ENCODE measurements at regions of chrX and their contacts with region 1.

Region 1: GRCh38 chrX:65677954-65678469 is 10.6 kb downstream of the MSN start:
- DNase-seq: peak in 2 of 3 donors; percentile 21 to 47
- H3K4me3 ChIP-seq: peak overlapping the region in 1 of 3 experiments; percentile 49
- H3K4me3 Mint-ChIP-seq: peak overlapping the region in 1 of 2 donors; percentile 46
- H3K27ac ChIP-seq: peak overlapping the region; percentile 70 to 75
- H3K27ac Mint-ChIP-seq: peak overlapping the region; percentile 77 to 94 (median 87)
- H3K4me1 ChIP-seq: peaks cover 93 to 97% of the 10 kb centered on the region in 2 donors
- H3K4me1 Mint-ChIP-seq: peaks cover 85% of the 10 kb centered on the region
- H3K27me3 ChIP-seq: peaks cover 0 to 12% of the 10 kb centered on the region in 2 donors
- H3K27me3 Mint-ChIP-seq: peaks cover 0 to 26% (median 1%) of the 10 kb centered on the region in 3 donors
- CTCF ChIP-seq: no peak

Region 2: GRCh38 chrX:64908121-64908520 is 769.9 kb before region 1 on chrX:
- intact Hi-C with region 1: no loop called
- DNase-seq: no peak
- H3K4me3 ChIP-seq: no peak overlapping the region
- H3K4me3 Mint-ChIP-seq: no peak overlapping the region
- H3K27ac ChIP-seq: no peak overlapping the region
- H3K27ac Mint-ChIP-seq: peak overlapping the region in 1 of 7 donors; percentile 20
- H3K4me1 ChIP-seq: no peaks in the 10 kb centered on the region
- H3K4me1 Mint-ChIP-seq: no peaks in the 10 kb centered on the region
- H3K27me3 ChIP-seq: no peaks in the 10 kb centered on the region
- H3K27me3 Mint-ChIP-seq: no peaks in the 10 kb centered on the region
- CTCF ChIP-seq: no peak

Region 3: GRCh38 chrX:65551489-65552339 is 126.3 kb before region 1 on chrX:
- intact Hi-C with region 1: no loop called
- DNase-seq: no peak
- H3K4me3 ChIP-seq: no peak overlapping the region
- H3K4me3 Mint-ChIP-seq: no peak overlapping the region
- H3K27ac ChIP-seq: no peak overlapping the region
- H3K27ac Mint-ChIP-seq: no peak overlapping the region
- H3K4me1 ChIP-seq: no peaks in the 10 kb centered on the region
- H3K4me1 Mint-ChIP-seq: peaks cover 5% of the 10 kb centered on the region
- H3K27me3 ChIP-seq: peaks cover 0 to 6% of the 10 kb centered on the region in 2 donors
- H3K27me3 Mint-ChIP-seq: peaks cover 0 to 32% (median 0%) of the 10 kb centered on the region in 3 donors
- CTCF ChIP-seq: no peak

Region 4: DNA sequence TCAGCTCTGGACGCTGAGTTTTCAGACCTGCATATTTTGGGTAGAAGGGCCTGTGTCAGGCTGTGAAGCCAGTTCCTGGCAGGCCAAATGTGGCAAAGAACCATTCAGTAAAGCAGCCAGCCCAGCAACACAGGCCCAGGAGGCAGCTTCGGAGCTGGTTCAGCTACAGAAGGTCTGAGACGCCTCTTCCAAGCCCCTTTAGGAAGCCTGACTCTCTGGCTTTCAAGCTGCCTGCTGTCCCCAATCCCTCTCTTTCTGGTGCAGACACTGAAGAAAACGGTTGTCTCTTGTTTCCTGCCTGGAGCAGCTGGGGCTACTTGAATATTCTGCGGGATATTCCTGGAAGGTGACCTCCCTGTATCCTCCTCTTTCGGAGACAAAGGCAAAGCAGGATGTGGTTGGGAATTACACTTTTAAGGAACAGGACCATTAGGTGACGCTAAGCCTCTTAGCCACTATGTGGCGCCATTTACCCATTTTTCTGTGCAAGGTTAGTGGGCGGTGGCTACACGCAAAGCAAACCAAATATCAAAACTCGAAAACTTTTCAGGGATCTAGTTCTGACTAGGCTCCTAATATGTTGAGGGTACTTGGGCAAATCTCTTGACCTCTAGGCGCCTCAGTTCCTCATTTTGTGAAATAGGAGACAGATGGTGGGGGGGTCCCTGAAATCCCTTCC is 96.2 kb before region 1 on chrX:
- intact Hi-C with region 1: no loop called
- DNase-seq: peak; percentile 54 to 67 (median 62)
- H3K4me3 ChIP-seq: no peak overlapping the region
- H3K4me3 Mint-ChIP-seq: no peak overlapping the region
- H3K27ac ChIP-seq: no peak overlapping the region
- H3K27ac Mint-ChIP-seq: peak overlapping the region in 1 of 7 donors; percentile 72
- H3K4me1 ChIP-seq: peaks cover 5 to 8% of the 10 kb centered on the region in 2 donors
- H3K4me1 Mint-ChIP-seq: peaks cover 2% of the 10 kb centered on the region
- H3K27me3 ChIP-seq: peaks cover 0 to 14% of the 10 kb centered on the region in 2 donors
- H3K27me3 Mint-ChIP-seq: peaks cover under 1 to 50% (median 1%) of the 10 kb centered on the region in 3 donors
- CTCF ChIP-seq: peak; percentile 67

Region 5: GRCh38 chrX:65706041-65706828 is 28.2 kb after region 1 on chrX:
- intact Hi-C with region 1: loop called in 1 of 2 experiments (anchors 5 kb)
- DNase-seq: peak in 2 of 3 donors; percentile 12 to 67
- H3K4me3 ChIP-seq: no peak overlapping the region
- H3K4me3 Mint-ChIP-seq: peak overlapping the region in 1 of 2 donors; percentile 4
- H3K27ac ChIP-seq: peak overlapping the region; percentile 6 to 76
- H3K27ac Mint-ChIP-seq: peak overlapping the region; percentile 24 to 90 (median 81)
- H3K4me1 ChIP-seq: peaks cover 50 to 53% of the 10 kb centered on the region in 2 donors
- H3K4me1 Mint-ChIP-seq: peaks cover 62% of the 10 kb centered on the region
- H3K27me3 ChIP-seq: peaks cover 0 to 2% of the 10 kb centered on the region in 2 donors
- H3K27me3 Mint-ChIP-seq: peaks cover 0 to 31% (median 0%) of the 10 kb centered on the region in 3 donors
- CTCF ChIP-seq: no peak

Region 6: GRCh38 chrX:66004928-66005829 is 327.2 kb after region 1 on chrX:
- intact Hi-C with region 1: loop called in 1 of 2 experiments (anchors 10 kb)
- DNase-seq: peak in 2 of 3 donors; percentile 63 to 70
- H3K4me3 ChIP-seq: peak overlapping the region in 1 of 3 experiments; percentile 68
- H3K4me3 Mint-ChIP-seq: peak overlapping the region in 1 of 2 donors; percentile 71
- H3K27ac ChIP-seq: peak overlapping the region in 1 of 2 donors; percentile 88
- H3K27ac Mint-ChIP-seq: peak overlapping the region; percentile 86 to 96 (median 95)
- H3K4me1 ChIP-seq: peaks cover 90 to 98% of the 10 kb centered on the region in 2 donors
- H3K4me1 Mint-ChIP-seq: peaks cover 80% of the 10 kb centered on the region
- H3K27me3 ChIP-seq: no peaks in the 10 kb centered on the region
- H3K27me3 Mint-ChIP-seq: peaks cover 0 to 7% (median 0%) of the 10 kb centered on the region in 3 donors
- CTCF ChIP-seq: no peak

Measured in CD14-positive monocyte (primary cell).